ENCODE measurements at regions of chr20 and their contacts with region 1.

Region 1: DNA sequence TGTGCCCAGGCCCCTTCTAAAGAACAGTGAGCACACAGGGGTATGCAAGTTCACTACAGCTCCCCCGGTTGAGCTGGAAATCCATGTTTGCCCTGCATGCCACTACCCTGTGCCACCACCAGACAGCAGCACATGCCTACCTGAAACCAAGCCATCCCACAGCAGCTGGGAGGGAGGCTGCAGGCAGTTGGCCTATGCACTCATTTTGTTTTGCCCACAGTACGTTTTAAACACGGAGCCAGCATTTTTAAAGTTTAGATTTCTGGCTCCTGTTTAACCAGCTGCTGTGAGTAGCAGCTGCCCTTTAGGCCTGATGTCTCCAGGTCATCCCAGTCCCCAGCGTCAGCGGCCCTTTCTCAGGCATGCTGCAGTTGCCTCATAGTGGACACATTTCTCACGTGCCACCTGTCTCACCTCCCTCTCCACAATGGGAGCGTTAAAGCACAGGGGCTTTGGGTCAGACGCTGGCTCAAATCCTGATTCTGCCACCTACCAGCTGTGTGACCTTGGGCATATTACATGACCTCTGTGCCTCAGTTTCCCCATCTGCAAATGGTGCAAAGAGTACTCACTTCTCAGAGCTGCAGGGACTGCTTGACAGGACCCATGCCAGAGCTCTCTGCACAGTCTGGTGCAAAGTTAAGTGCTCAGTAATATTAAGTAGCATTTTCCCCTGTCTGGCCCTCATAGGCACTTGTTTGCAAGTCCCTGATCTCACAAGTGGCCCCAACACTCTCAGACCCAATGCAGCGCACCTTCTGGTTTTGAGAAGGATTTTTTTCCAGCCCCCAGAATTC is 8.1 kb upstream of the UBE2V1 start:
- DNase-seq: peak; percentile 87
- ATAC-seq: peak; percentile 82
- H3K4me3 ChIP-seq: no peak overlapping the region
- H3K27ac ChIP-seq: no peak overlapping the region
- H3K4me1 ChIP-seq: peaks cover 14% of the 10 kb centered on the region
- H3K27me3 ChIP-seq: no peaks in the 10 kb centered on the region
- CTCF ChIP-seq: peak; percentile 98

Region 2: DNA sequence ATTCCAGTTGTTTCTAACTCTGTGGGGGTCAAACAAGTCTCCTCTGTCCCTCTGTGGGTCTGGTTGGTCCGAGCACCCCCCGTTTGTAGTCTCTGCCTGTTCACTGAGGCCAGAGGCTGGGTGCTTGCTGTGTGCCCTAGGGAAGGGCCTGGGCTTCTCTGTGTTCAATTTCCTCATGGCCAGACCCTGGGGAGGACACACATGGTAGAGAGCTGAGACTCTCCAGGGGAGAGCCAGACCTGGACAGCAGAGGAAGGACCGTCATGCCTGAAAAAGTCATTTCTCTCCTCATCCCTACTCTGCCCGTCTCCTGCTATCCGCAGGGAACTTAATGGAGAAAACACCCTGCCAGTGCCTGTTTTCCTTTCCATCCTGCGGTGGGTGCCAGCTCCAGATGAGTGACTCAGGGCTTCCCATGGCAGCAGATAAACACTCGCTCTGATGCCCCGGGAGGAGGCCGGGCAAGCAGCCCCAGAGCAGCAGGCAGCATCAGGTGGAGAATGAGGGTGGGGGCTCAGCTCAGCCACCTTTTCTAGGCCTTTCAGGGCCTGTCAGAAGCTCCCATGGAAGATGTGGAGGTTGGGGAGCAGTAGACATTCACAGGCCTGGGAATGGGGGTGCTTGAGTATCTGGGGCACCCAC is 86.4 kb before region 1 on chr20:
- CTCF ChIA-PET with region 1: no interaction called
- POLR2A ChIA-PET with region 1: no interaction called
- intact Hi-C with region 1: no loop called
- DNase-seq: peak; percentile 88
- ATAC-seq: peak; percentile 72
- H3K4me3 ChIP-seq: no peak overlapping the region
- H3K27ac ChIP-seq: peak overlapping the region; percentile 87
- H3K4me1 ChIP-seq: peaks cover 35% of the 10 kb centered on the region
- H3K27me3 ChIP-seq: no peaks in the 10 kb centered on the region
- CTCF ChIP-seq: no peak

Region 3: DNA sequence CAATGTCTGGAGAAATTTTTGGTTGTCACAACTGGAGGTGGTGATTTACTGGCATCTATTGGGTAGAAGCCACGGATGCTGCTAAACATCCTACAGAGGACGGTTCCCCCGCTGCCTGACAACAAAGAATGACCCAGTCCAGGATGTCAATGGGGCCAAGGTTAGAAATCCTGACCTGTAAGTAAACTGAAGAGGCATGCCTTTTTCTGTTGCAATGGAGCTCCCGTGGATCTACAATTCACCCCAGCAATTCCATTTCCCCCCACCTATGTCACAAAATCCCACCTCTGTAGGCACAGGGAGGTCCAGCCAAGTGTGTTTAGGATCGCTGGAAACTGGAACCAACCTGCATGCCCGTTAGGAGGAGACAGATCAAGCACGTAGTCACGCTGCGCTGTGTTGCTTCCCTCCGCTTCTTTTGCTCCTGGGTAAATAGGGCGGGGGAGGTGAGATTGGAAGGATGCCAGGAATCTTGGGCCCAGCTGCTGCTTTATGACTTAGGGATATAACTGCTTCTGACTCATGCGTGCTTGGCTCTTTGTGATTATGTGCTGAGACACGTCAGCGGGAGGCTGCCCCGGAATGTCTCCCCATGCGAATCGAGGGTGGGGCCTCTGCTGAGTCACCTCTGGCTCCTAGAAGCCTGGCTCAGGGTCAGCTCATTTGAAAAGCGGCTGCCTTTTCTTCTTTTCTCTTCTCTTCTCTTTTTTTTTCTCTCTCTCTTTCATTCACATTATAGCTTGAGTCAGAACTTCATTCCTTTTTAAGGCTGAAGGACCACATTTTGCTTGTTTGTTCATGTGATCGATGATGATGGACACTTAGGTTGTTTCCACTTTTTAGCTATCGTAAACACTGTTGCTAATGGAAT is 44.8 kb after region 1 on chr20:
- CTCF ChIA-PET with region 1: interaction called, 26 read pairs
- POLR2A ChIA-PET with region 1: no interaction called
- intact Hi-C with region 1: loop called (anchors 1 kb)
- DNase-seq: peak; percentile 100
- ATAC-seq: peak; percentile 89
- H3K4me3 ChIP-seq: peak overlapping the region; percentile 66
- H3K27ac ChIP-seq: peak overlapping the region; percentile 81
- H3K4me1 ChIP-seq: peaks cover 42% of the 10 kb centered on the region
- H3K27me3 ChIP-seq: no peaks in the 10 kb centered on the region
- CTCF ChIP-seq: peak; percentile 15; the same call in 1 of the 2 replicates

Region 4: DNA sequence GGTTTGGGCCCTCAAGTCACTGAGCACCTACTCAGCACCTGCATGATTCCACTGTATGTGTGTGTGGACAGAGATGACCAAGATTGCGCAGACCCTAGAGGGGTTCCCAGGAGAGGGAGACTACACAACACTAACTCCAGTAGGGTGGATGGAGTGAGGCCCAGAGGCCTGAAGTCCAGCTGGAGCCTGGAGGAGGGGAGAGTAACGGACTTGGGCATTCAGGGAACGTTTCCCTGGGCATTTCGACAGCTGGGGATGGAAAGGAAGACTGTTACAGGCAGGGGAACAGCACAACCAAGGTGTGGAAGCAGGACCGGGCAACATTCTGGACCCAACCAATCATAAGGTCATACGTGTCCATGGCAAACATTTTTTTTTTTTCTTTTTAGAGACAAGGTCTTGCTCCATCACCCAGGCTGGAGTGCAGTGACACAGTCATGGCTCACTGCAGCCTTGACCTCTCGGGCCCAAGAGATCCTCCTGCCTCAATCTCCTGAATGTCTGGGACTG is 58.5 kb after region 1 on chr20:
- CTCF ChIA-PET with region 1: interaction called, 13 read pairs
- POLR2A ChIA-PET with region 1: no interaction called
- intact Hi-C with region 1: no loop called
- DNase-seq: no peak
- ATAC-seq: no peak; the same call in 1 of the 2 replicates
- H3K4me3 ChIP-seq: no peak overlapping the region
- H3K27ac ChIP-seq: no peak overlapping the region
- H3K4me1 ChIP-seq: no peaks in the 10 kb centered on the region
- H3K27me3 ChIP-seq: no peaks in the 10 kb centered on the region
- CTCF ChIP-seq: no peak

Measured in PC-3 (cell line).